GM13977 (cell line): ENCODE measurements at regions of chr2 and their contacts with region 1.

Region 1: GRCh38 chr2:234146087-234146826 is 95.8 kb downstream of the SPP2 start:
- DNase-seq: no peak
- CTCF ChIP-seq: no peak

Region 2: DNA sequence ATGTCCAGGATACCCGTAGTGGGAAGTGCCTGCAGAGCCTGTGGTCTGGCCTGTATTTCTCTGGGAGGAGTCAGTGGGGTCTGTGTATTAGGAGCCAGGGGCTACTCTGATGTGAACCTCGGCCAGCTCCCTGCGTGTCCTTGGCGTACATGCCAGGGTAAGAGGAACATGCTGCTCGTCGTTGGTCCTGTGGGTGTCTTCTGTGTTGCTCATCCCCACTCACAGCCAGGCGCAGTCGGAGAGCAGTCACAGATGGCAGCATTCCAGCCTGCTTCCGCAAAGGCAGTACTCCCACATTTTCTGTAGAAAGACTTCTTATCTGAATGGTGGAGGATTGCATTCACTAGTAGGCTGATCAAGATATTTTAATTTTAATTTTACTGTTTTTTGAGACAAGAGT is 707.1 kb before region 1 on chr2:
- in situ Hi-C with region 1: no loop called
- DNase-seq: no peak
- CTCF ChIP-seq: no peak

Region 3: GRCh38 chr2:233871432-233871831 is 274.8 kb before region 1 on chr2:
- in situ Hi-C with region 1: no loop called
- DNase-seq: no peak
- CTCF ChIP-seq: no peak

Region 4: DNA sequence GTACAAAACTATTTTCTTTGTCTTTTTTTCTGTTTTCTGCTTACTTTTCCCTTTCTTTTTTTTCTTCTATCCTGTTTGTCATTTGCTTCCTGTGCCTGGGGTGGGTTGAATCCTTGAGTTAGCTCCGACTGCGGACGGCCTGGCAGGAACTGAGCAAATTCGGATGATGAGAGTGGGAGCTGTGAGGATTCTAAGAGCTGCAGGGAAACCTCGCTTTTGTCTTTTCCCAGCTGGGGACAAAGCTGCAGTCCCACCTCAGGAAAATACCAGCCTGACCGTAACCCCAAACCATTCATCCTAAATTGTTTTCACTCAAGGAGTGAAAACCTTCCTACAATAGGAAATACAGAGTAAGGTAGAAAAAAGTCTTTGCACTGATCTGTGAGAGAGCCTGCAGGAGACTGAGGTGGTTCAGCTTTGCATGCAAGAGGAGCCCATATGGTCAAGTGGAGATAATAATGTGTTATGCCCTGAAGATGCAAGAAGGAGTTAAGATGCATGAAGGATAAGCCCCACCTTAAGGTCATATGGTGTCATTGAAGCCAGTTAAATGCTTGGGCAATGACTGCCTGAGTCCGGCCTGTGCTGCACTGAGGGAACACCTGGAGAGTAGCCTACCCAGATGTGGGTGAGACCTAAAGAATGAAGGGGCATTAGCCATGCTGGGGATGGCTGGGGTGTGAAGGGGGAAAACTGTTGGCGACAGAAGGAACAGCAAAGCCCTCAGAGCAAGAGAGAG is 382.3 kb after region 1 on chr2:
- in situ Hi-C with region 1: loop called (anchors 10 kb)
- DNase-seq: no peak
- CTCF ChIP-seq: no peak